ENCODE measurements at regions of chr14 and their contacts with region 1.

Region 1: GRCh38 chr14:54762296-54762695 is 140.3 kb downstream of the GCH1 start:
- DNase-seq: no peak
- H3K4me3 ChIP-seq: no peak overlapping the region
- H3K27ac ChIP-seq: no peak overlapping the region
- H3K4me1 ChIP-seq: no peaks in the 10 kb centered on the region
- H3K27me3 ChIP-seq: no peaks in the 10 kb centered on the region
- CTCF ChIP-seq: no peak

Region 2: GRCh38 chr14:54555651-54556050 is 206.6 kb before region 1 on chr14:
- CTCF ChIA-PET with region 1: no interaction called
- POLR2A ChIA-PET with region 1: no interaction called
- intact Hi-C with region 1: no loop called
- DNase-seq: no peak
- H3K4me3 ChIP-seq: no peak overlapping the region
- H3K27ac ChIP-seq: no peak overlapping the region
- H3K4me1 ChIP-seq: no peaks in the 10 kb centered on the region
- H3K27me3 ChIP-seq: no peaks in the 10 kb centered on the region
- CTCF ChIP-seq: no peak

Region 3: GRCh38 chr14:54637270-54638134 is 124.8 kb before region 1 on chr14:
- CTCF ChIA-PET with region 1: no interaction called
- POLR2A ChIA-PET with region 1: interaction called, 12 read pairs
- intact Hi-C with region 1: no loop called
- DNase-seq: peak in 1 of 2 experiments; percentile 5
- H3K4me3 ChIP-seq: no peak overlapping the region
- H3K27ac ChIP-seq: no peak overlapping the region
- H3K4me1 ChIP-seq: no peaks in the 10 kb centered on the region
- H3K27me3 ChIP-seq: no peaks in the 10 kb centered on the region
- CTCF ChIP-seq: no peak

Region 4: DNA sequence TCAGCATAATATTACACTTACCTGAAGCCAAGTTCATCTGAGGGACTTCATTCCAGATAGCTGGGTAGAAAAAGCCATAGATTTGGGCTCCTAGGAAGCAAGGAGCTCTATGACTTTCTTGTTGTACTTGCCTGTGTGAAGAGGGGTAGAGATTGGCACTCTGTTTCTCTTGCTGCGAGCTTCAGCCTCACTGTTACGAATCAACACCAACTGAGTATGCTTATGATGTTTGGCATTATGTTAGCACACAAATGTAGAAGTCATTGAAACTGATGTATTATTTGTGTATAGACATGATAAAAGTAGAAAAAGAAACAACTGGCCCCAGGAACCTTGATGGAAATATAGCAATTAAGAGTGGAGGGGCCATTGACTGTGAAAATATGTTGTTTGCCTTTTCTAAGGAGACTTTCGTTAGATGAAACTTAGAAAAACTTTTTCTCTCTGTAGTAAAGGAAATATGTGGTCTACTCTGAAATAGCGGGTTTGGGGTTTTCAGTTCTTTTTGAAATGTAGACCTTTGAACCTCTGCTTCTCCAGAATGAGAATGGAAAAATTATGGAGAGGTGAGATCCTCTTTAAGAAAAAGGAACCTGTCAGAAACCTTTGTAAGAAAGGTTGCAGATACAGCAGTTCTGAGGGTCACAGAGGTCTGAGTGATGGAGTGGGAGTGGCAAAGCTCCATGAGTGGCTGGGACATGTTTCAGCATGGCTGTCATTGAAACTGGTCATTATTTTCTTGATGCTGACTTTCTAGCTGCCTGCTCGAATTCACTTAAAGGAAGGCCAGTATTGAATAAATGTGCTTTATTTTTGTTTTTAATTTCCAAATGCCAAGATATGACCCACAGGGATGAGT is 19.6 kb before region 1 on chr14:
- CTCF ChIA-PET with region 1: no interaction called
- POLR2A ChIA-PET with region 1: no interaction called
- intact Hi-C with region 1: no loop called
- DNase-seq: no peak
- H3K4me3 ChIP-seq: no peak overlapping the region
- H3K27ac ChIP-seq: no peak overlapping the region
- H3K4me1 ChIP-seq: peaks cover 5% of the 10 kb centered on the region
- H3K27me3 ChIP-seq: no peaks in the 10 kb centered on the region
- CTCF ChIP-seq: no peak

Region 5: GRCh38 chr14:55438066-55438683 is 675.9 kb after region 1 on chr14:
- CTCF ChIA-PET with region 1: interaction called, 13 read pairs
- POLR2A ChIA-PET with region 1: no interaction called
- intact Hi-C with region 1: no loop called
- DNase-seq: peak in 1 of 2 experiments; percentile 66
- H3K4me3 ChIP-seq: no peak overlapping the region
- H3K27ac ChIP-seq: no peak overlapping the region
- H3K4me1 ChIP-seq: peaks cover 20% of the 10 kb centered on the region
- H3K27me3 ChIP-seq: no peaks in the 10 kb centered on the region
- CTCF ChIP-seq: peak; percentile 76

Measured in PC-9 (cell line).